ENCODE measurements at regions of chr3 and their contacts with region 1.

Region 1: GRCh38 chr3:113878403-113878802 is 39.8 kb downstream of the GRAMD1C start:
- DNase-seq: no peak
- ATAC-seq: no peak
- H3K4me3 ChIP-seq: no peak overlapping the region
- H3K27ac ChIP-seq: no peak overlapping the region
- H3K4me1 ChIP-seq: no peaks in the 10 kb centered on the region
- H3K27me3 ChIP-seq: no peaks in the 10 kb centered on the region
- CTCF ChIP-seq: no peak
- EP300 ChIP-seq: no peak
- POLR2A ChIP-seq: no peak
- RAD21 ChIP-seq: no peak

Region 2: GRCh38 chr3:113890256-113890900 is 12.0 kb after region 1 on chr3:
- CTCF ChIA-PET with region 1: no interaction called
- POLR2A ChIA-PET with region 1: interaction called, 3 read pairs
- in situ Hi-C with region 1: no loop called
- intact Hi-C with region 1: loop called (anchors 1 kb)
- DNase-seq: peak in 2 of 4 experiments; percentile 5 to 9
- ATAC-seq: peak; percentile 82
- H3K4me3 ChIP-seq: no peak overlapping the region
- H3K27ac ChIP-seq: no peak overlapping the region
- H3K4me1 ChIP-seq: no peaks in the 10 kb centered on the region
- H3K27me3 ChIP-seq: peaks cover 0 to 10% of the 10 kb centered on the region in 2 experiments; a peak in 4 of 5 replicates
- CTCF ChIP-seq: 0 out of 6 replicates have a peak, but pooled peaks of 1 of the 3 experiments have one; percentile 15
- EP300 ChIP-seq: no peak
- POLR2A ChIP-seq: no peak
- RAD21 ChIP-seq: no peak

Region 3: DNA sequence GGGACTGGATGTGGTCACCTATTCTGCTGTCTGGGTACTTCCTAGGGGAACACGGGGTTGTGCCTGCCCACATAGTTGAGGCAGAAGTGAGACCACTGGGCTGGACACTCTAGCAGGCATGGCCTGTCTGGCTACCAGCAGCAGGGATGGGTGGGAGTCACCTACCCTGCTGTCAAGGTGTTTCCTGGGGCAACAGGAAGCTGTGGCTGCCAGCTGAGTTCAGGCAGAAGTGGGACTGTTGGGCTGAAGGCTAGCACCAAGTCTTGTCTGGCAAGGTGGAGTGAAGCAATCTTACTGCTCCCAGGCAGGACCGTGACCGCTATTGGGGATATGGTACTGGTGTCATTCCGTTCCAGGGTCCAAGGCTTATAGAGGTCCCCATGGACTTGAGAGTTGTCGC is 49.2 kb after region 1 on chr3:
- CTCF ChIA-PET with region 1: no interaction called
- POLR2A ChIA-PET with region 1: no interaction called
- in situ Hi-C with region 1: no loop called
- intact Hi-C with region 1: no loop called
- DNase-seq: no peak
- ATAC-seq: no peak
- H3K4me3 ChIP-seq: no peak overlapping the region
- H3K27ac ChIP-seq: no peak overlapping the region
- H3K4me1 ChIP-seq: no peaks in the 10 kb centered on the region
- H3K27me3 ChIP-seq: no peaks in the 10 kb centered on the region; a peak in 1 of 5 replicates
- CTCF ChIP-seq: no peak
- EP300 ChIP-seq: no peak
- POLR2A ChIP-seq: no peak
- RAD21 ChIP-seq: no peak

Region 4: DNA sequence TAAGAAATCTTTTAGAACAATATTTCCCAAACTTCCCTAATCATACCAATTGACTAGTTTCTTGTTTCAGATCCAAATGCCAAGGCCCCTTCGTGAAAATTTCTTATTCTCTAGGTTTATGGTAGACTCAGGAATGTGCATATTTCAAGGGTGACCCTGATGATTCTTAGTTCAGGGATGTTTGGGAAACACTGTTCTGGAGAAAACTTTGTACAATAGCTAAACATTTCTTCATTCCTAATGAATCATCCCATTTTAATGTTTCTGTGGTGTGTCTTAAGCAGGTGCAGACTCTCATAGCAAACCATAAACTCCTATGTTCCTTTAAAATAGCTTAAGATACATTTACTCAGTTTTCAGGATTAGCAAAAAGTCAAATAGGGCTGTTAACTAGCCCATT is 729.9 kb after region 1 on chr3:
- CTCF ChIA-PET with region 1: no interaction called
- POLR2A ChIA-PET with region 1: no interaction called
- in situ Hi-C with region 1: no loop called
- intact Hi-C with region 1: no loop called
- DNase-seq: no peak
- ATAC-seq: no peak
- H3K4me3 ChIP-seq: no peak overlapping the region
- H3K27ac ChIP-seq: no peak overlapping the region
- H3K4me1 ChIP-seq: no peaks in the 10 kb centered on the region
- H3K27me3 ChIP-seq: no peaks in the 10 kb centered on the region
- CTCF ChIP-seq: no peak
- EP300 ChIP-seq: no peak
- POLR2A ChIP-seq: no peak
- RAD21 ChIP-seq: no peak

Measured in K562 (cell line).